IMR-90 (cell line): ENCODE measurements at regions of chr12 and their contacts with region 1.

Region 1: DNA sequence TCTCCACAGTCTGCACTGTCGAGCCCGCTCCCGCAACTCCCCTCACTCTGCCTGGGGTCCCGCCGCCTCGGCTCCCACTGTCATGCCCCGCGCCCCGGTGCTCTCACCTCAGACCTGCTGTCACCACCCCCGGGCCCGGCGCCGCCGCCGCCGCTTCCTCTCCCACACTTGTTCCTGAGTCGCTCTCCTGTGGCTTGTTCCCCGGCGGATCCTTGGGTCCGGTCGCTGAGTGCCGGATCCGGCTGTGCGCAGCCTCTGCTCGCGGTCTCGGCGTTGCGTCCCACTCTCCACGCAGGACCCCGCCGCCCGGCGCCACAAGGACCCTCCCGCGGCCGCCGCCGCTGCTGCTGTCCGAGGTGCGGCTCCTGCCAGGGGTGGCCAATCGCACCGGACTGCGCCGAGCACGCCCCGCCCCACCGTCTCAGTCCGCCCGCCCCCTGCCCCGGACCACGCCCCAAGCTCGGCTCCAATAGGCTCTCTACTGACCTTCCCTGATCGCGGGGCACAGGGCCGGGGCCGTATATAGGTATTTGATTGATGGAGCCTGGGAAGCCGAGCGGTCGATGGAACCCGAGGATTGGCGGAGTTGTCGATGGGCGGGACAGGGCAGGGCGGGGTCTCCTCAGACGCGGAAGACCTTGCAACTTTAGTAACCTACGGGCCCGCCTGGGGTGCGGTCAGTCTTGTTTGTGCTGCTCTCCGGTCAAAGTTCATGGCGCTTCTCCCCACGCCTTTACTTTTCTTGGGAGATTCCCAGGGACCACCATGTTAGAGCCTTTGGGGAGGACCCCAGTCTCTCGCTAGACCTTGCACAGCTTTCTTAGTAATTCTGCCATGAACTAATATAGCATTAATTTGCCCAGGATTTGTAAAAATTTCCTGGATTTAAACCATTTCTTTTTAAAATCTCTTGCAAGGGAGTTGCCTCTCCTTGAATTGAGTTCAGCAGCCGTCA is at the start of gene TAOK3:
- DNase-seq: peak; percentile 97
- ATAC-seq: peak; percentile 92
- H3K4me3 ChIP-seq: peak within 1 kb of the TSS; percentile 87
- H3K27ac ChIP-seq: peak within 1 kb of the TSS; percentile 83
- H3K4me1 ChIP-seq: peaks cover 1% of the 10 kb centered on the region; the same call in 1 of the 2 replicates
- H3K27me3 ChIP-seq: no peaks in the 10 kb centered on the region
- CTCF ChIP-seq: no peak
- POLR2A ChIP-seq: peak; percentile 90
- RAD21 ChIP-seq: no peak
- total RNA-seq, gene TAOK3: 53.0 and 54.5 TPM in 2 replicates

Region 2: DNA sequence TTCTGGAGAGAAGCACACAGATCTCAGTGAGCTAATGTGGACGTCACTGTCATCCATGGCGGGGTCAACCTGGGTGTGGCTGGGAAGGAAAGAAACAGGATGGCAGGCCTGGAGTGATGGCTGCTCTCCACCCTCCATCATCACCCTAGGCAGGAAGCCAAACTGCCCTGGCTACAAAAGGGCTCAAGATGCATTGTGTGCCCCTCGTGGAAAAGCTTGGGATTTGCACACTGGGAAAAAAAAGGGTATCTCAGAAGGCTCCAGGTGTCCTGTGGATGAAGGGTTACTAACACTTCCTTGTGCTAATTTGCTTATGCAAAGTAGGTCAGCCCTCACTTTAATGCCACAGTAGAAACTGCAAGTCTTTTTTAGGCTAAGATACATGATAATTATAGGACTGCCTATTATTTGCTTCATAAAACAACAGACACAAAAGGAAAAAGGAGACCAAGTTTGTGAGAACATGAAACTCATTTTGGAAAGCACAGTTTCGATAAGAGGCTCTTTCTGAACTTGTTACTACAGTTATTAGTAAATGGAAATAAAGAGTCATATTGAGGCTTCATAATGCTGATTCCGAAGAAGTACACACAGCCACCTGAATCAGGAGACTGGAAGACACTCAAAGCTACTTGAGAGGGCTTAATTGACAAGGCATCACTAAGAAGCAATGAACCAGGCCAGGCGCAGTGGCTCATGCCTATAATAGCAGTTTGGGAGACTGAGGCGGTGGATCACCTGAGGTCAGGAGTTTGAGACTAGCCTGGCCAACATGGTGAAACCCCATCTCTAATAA is 337.4 kb before region 1 on chr12:
- CTCF ChIA-PET with region 1: no interaction called
- POLR2A ChIA-PET with region 1: interaction called, 4 read pairs
- dilution Hi-C with region 1: no loop called
- in situ Hi-C with region 1: loop called (anchors 25 kb)
- intact Hi-C with region 1: no loop called
- DNase-seq: peak; percentile 22
- ATAC-seq: peak; percentile 33
- H3K4me3 ChIP-seq: no peak overlapping the region
- H3K27ac ChIP-seq: no peak overlapping the region
- H3K4me1 ChIP-seq: no peaks in the 10 kb centered on the region
- H3K27me3 ChIP-seq: no peaks in the 10 kb centered on the region
- CTCF ChIP-seq: no peak
- POLR2A ChIP-seq: no peak
- RAD21 ChIP-seq: no peak

Region 3: GRCh38 chr12:118120579-118121363 is 252.0 kb before region 1 on chr12:
- CTCF ChIA-PET with region 1: interaction called, 9 read pairs
- POLR2A ChIA-PET with region 1: no interaction called
- dilution Hi-C with region 1: no loop called
- in situ Hi-C with region 1: no loop called
- intact Hi-C with region 1: loop called (anchors 1 kb)
- DNase-seq: peak; percentile 61
- ATAC-seq: peak; percentile 97
- H3K4me3 ChIP-seq: no peak overlapping the region
- H3K27ac ChIP-seq: peak overlapping the region; percentile 39; the same call in 1 of the 2 replicates
- H3K4me1 ChIP-seq: peaks cover 2% of the 10 kb centered on the region; the same call in 1 of the 2 replicates
- H3K27me3 ChIP-seq: no peaks in the 10 kb centered on the region
- CTCF ChIP-seq: peak; percentile 50
- POLR2A ChIP-seq: no peak
- RAD21 ChIP-seq: peak; percentile 45

Region 4: DNA sequence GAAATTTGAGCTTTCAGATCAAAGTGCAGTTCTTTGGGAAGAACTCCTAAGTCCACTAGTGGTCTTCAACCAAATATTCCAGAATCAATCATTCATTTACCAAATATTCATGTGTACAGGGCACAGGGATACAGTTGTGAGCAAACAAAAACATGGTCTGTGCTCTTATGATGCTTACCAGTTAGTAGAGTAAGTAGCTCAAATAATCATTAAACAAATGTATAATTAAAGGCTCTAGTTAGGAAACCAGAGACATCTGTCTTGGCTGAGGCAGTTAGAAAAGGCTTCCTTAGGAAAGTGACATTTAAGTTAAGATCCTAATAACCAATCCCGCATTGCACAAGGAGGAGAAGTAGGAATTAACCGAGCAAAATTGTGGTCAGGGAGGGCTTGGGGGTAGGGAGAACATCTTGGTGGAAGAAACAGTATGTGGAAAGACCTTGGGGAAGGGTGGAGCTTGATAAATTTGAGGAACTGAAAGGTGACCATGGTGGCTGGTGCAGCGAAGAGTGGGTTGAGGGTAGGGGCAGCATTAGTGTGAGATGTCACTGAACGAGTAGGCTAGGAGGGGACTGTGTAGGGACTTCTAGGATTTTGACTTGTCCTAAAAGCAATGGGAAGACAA is 196.9 kb before region 1 on chr12:
- CTCF ChIA-PET with region 1: interaction called, 65 read pairs
- POLR2A ChIA-PET with region 1: no interaction called
- dilution Hi-C with region 1: no loop called
- in situ Hi-C with region 1: loop called (anchors 5 kb)
- intact Hi-C with region 1: no loop called
- DNase-seq: no peak
- ATAC-seq: no peak
- H3K4me3 ChIP-seq: no peak overlapping the region
- H3K27ac ChIP-seq: no peak overlapping the region
- H3K4me1 ChIP-seq: no peaks in the 10 kb centered on the region
- H3K27me3 ChIP-seq: no peaks in the 10 kb centered on the region
- CTCF ChIP-seq: no peak
- POLR2A ChIP-seq: no peak
- RAD21 ChIP-seq: no peak

Region 5: GRCh38 chr12:118307069-118307954 is 65.5 kb before region 1 on chr12:
- CTCF ChIA-PET with region 1: interaction called, 4 read pairs
- POLR2A ChIA-PET with region 1: no interaction called
- dilution Hi-C with region 1: no loop called
- in situ Hi-C with region 1: no loop called
- intact Hi-C with region 1: loop called (anchors 1 kb)
- DNase-seq: peak; percentile 95
- ATAC-seq: peak; percentile 96
- H3K4me3 ChIP-seq: peak overlapping the region; percentile 55
- H3K27ac ChIP-seq: peak overlapping the region; percentile 97
- H3K4me1 ChIP-seq: peaks cover 6% of the 10 kb centered on the region
- H3K27me3 ChIP-seq: no peaks in the 10 kb centered on the region
- CTCF ChIP-seq: 0 out of 2 replicates have a peak, but pooled peaks have one; percentile 2
- POLR2A ChIP-seq: peak; percentile 73; the same call in 1 of the 2 replicates
- RAD21 ChIP-seq: peak; percentile 9

Region 6: DNA sequence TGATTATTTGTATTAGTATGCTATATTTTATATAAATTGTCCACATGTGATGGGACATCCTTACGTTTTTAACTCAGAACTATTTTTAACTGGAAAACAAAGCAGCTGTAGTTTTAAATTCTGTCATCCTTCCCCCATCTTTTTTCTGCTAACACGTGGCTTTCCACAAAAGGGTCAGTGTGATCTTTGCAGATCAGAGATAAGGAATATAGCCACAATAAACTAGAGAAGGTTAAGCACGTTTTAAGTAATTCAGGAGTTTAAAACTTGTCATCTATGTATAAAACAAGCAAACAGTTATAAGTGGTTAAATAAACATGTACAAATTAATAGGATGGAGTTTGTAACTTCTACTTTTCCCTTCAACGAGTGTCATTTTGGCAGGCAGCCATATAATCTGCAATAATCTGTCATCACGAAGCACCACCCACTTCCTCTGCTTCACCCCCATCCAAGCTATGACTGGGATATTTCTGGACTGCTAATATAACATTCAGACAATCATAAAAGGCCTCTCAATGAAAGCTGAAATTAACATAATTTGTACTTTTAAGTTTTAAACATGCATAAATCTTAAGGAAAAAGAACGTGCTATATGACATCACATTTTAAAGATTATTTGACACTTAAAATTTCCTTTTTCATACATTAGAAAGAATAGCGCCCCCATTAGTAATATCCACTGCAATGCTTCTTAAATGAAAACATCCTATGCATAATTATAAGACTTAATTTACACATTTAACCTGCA is 15.4 kb before region 1 on chr12:
- CTCF ChIA-PET with region 1: interaction called, 10 read pairs
- POLR2A ChIA-PET with region 1: no interaction called
- dilution Hi-C with region 1: no loop called
- in situ Hi-C with region 1: no loop called
- intact Hi-C with region 1: no loop called
- DNase-seq: peak; percentile 65
- ATAC-seq: peak; percentile 6
- H3K4me3 ChIP-seq: no peak overlapping the region
- H3K27ac ChIP-seq: peak overlapping the region; percentile 71
- H3K4me1 ChIP-seq: peaks cover 9% of the 10 kb centered on the region
- H3K27me3 ChIP-seq: no peaks in the 10 kb centered on the region
- CTCF ChIP-seq: no peak
- POLR2A ChIP-seq: no peak
- RAD21 ChIP-seq: no peak

Region 7: DNA sequence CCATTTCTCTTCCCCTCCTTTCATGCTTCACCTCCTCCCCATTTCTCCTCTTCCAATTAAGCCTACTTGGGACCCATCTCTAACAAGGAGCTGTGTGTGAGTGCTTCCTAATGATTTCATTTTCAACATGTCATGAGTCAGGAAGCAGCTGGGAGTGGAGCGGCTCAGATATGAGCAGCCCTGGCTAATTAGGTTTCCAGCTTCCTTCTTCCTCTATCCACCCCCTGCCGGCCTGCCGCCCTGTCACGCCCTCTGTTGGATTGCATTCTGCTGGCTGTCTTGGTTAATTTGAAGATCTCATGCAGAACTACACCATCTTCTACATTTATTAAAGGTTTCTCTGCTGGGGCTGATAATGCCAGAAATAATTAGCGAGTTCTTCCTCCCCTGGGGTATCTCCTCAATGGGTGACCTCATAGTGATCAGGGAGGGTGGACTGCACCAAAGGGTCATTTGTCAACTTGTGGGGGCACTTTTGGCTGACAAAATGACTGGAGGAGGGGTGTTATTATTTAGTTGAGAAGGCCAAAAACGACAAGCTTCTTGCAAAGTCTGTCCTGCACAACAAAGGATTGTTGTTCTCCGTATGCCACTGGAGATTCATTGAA is 307.6 kb after region 1 on chr12:
- CTCF ChIA-PET with region 1: no interaction called
- POLR2A ChIA-PET with region 1: no interaction called
- dilution Hi-C with region 1: no loop called
- in situ Hi-C with region 1: no loop called
- intact Hi-C with region 1: no loop called
- DNase-seq: no peak
- ATAC-seq: no peak
- H3K4me3 ChIP-seq: no peak overlapping the region
- H3K27ac ChIP-seq: no peak overlapping the region
- H3K4me1 ChIP-seq: no peaks in the 10 kb centered on the region
- H3K27me3 ChIP-seq: no peaks in the 10 kb centered on the region
- CTCF ChIP-seq: no peak
- POLR2A ChIP-seq: no peak
- RAD21 ChIP-seq: no peak

Region 8: GRCh38 chr12:120116792-120117651 is 1744.2 kb after region 1 on chr12:
- CTCF ChIA-PET with region 1: no interaction called
- POLR2A ChIA-PET with region 1: no interaction called
- dilution Hi-C with region 1: no loop called
- in situ Hi-C with region 1: loop called (anchors 25 kb)
- intact Hi-C with region 1: no loop called
- DNase-seq: peak; percentile 90
- ATAC-seq: peak; percentile 75
- H3K4me3 ChIP-seq: peak overlapping the region; percentile 95
- H3K27ac ChIP-seq: peak overlapping the region; percentile 98
- H3K4me1 ChIP-seq: peaks cover 23% of the 10 kb centered on the region
- H3K27me3 ChIP-seq: no peaks in the 10 kb centered on the region
- CTCF ChIP-seq: no peak
- POLR2A ChIP-seq: 0 out of 2 replicates have a peak, but pooled peaks have one; percentile 43
- RAD21 ChIP-seq: no peak